Right ventricle myocardium inferior (tissue), 1 donor: ENCODE measurements at regions of chr1 and their contacts with region 1.

Region 1: GRCh38 chr1:37486680-37487618 is 12.6 kb downstream of the ZC3H12A start:
- DNase-seq: peak; percentile 90
- ATAC-seq: peak; percentile 75

Region 2: DNA sequence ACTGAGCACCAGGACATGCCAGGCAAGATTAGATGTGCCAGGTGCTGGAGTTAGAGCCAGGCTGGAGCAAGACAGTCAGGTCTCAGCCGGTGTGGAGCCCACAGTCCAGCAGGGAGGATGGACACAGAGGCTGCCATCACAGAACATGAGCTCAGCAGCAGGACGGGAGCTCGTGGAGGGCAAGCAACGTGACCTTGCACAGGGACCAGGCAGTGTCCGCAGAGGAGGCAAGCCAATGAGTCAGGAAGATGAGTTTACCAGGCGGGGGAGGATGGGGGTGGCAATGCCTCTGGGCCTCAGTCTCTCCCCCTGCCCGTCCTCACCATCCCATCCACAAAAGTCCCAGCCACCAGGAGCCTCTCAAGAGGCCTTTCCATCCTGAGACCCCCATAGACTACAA is 33.3 kb before region 1 on chr1:
- intact Hi-C with region 1: loop called (anchors 1 kb)
- DNase-seq: no peak
- ATAC-seq: no peak

Region 3: DNA sequence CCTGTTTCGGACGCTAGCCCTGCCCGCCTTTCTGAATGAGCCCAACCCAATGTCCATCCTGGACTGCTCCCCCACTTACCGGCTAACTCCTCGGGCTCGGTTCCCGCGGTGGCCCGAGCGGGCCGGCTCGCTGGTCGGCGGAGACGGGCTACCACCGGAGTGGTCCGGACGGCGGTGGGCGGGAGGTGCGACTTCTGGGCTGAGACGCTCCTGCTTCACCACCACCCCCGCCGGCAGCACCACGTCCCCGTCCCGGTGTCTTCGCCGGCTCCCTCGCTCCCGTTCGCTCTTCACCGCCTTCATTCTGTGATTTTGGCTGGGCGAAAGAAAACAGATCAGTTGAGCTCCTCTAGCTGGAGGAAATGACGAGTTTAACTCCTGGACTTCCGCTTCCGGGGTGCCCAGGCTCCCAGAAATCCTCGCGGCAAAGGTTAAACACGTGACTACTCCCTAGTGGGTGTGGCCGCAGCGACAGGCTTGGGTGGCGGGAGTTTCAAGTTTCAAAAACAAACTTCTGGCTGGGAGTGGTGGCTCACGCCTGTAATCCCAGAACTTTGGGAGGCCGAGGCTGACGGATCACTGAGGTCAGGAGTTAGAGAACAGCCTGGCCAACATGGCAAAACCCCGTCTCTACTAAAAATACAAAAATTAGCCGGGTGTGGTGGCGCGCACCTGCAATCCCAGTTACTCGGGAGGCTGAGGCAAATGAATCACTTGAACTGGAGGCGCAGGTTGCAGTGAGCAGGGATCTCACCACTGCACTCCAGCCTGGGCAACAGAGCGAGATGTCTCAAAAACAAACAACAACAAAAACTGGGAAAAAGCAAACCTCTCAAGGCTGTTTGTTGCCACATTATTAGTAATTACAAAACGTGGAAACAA is 67.2 kb after region 1 on chr1 and contains the start of gene SNIP1:
- intact Hi-C with region 1: no loop called
- DNase-seq: peak; percentile 94
- ATAC-seq: peak; percentile 93
- total RNA-seq, gene SNIP1: 11.8 TPM